Heart left ventricle (tissue), 16 donors: ENCODE measurements at regions of chr14 and their contacts with region 1.

Region 1: GRCh38 chr14:21263656-21264411 is 5.4 kb downstream of the HNRNPC start:
- DNase-seq: no peak
- ATAC-seq: no peak
- H3K4me3 ChIP-seq: peak overlapping the region in 2 of 12 donors; percentile 2 to 99
- H3K27ac ChIP-seq: peak overlapping the region in 1 of 12 donors; percentile 98
- H3K4me1 ChIP-seq: peaks cover 8 to 92% (median 76%) of the 10 kb centered on the region in 12 donors
- H3K27me3 ChIP-seq: no peaks in the 10 kb centered on the region
- CTCF ChIP-seq: no peak
- POLR2A ChIP-seq: no peak

Region 2: GRCh38 chr14:20609215-20610001 is 654.4 kb before region 1 on chr14:
- intact Hi-C with region 1: no loop called
- DNase-seq: peak in 4 of 5 donors; percentile 54 to 68 (median 63)
- ATAC-seq: peak; percentile 21 to 59 (median 48)
- H3K4me3 ChIP-seq: peak overlapping the region; percentile 61 to 97 (median 84)
- H3K27ac ChIP-seq: peak overlapping the region in 9 of 12 donors; percentile 20 to 86 (median 60)
- H3K4me1 ChIP-seq: peaks cover 0 to 40% (median 5%) of the 10 kb centered on the region in 12 donors
- H3K27me3 ChIP-seq: no peaks in the 10 kb centered on the region
- CTCF ChIP-seq: peak; percentile 89 to 99 (median 94)
- POLR2A ChIP-seq: no peak

Region 3: DNA sequence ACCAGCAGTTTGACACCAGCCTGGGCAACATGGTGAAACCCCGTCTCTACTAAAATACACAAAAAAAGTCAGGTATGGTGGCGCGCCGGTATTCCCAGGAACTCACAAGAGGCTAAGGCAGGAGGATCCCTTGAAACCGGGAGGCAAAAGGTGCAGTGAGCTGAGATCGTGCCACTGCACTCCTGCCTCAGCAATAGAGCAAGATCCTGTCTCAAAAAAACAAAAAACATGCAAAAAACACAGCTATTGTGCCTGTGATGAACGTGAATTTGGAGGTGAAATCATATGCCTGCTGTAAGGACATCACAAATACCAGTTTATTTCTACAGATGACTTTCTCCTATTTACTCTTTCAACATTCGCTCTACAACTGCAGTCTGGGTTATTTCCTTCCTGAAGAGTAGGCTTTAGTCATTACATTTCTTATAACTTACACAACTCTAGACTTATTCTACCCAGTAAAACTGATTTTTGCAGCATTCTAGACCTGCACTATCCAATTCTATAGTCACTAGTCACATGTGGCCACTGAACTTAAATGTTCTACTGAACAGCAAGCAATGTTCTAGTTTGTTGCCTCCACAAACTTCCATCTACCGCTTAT is 42.9 kb before region 1 on chr14:
- intact Hi-C with region 1: loop called in 2 of 10 experiments (anchors 5 kb)
- DNase-seq: no peak
- ATAC-seq: no peak
- H3K4me3 ChIP-seq: no peak overlapping the region
- H3K27ac ChIP-seq: no peak overlapping the region
- H3K4me1 ChIP-seq: peaks cover 0 to 74% (median 31%) of the 10 kb centered on the region in 12 donors
- H3K27me3 ChIP-seq: no peaks in the 10 kb centered on the region
- CTCF ChIP-seq: no peak
- POLR2A ChIP-seq: no peak

Region 4: DNA sequence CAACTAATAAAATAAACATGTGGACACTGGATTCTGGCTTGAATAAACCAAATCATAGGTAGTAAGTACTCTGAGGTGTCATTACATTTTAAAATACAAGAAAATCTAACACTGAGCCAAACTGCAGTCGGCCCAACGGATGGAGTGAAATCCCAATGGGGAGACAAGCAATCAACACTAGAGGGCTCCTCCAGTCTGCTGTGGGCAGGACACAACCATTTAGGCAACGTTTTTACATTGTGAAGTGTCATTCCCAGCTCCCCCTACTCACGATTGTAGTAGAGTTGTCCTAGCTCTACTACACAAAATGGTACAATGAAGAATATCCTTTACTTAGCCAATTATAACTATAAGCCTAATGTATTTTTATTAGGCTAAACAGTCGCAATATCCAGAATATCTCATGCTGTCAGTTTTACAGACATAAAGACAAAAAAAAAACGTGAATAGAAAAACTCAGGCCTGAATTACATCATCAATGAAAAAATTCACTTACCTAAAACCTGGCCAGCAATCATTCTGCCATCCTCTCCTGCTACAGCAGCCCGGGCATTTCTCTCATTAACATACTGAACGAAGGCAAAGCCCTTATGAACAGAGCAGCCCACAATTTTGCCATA is 30.3 kb before region 1 on chr14:
- intact Hi-C with region 1: loop called in 1 of 10 experiments (anchors 5 kb)
- DNase-seq: no peak
- ATAC-seq: peak in 3 of 4 donors; percentile 38 to 55 (median 53)
- H3K4me3 ChIP-seq: no peak overlapping the region
- H3K27ac ChIP-seq: no peak overlapping the region
- H3K4me1 ChIP-seq: peaks cover 0 to 97% (median 63%) of the 10 kb centered on the region in 12 donors
- H3K27me3 ChIP-seq: no peaks in the 10 kb centered on the region
- CTCF ChIP-seq: peak in 9 of 12 donors; percentile 28 to 51 (median 36)
- POLR2A ChIP-seq: no peak

Region 5: DNA sequence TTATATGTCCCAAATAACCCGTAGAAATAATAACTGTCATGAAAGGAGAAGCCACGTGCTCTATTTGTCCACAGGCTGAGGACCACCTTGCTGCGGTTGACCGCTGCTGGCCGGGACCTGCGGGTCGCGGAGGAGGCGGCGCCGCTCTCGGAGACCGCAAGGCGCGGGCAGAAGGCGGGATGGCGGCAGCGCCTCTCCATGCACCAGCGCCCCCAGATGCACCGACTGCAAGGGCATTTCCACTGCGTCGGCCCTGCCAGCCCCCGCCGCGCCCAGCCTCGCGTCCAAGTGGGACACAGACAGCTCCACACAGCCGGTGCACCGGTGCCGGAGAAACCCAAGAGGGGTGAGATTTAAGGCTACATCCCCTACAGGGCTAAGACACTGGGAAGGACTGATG is 37.1 kb after region 1 on chr14:
- intact Hi-C with region 1: no loop called
- DNase-seq: peak; percentile 19 to 70 (median 33)
- ATAC-seq: peak in 3 of 4 donors; percentile 55 to 67 (median 66)
- H3K4me3 ChIP-seq: peak overlapping the region in 9 of 12 donors; percentile 28 to 44 (median 37)
- H3K27ac ChIP-seq: no peak overlapping the region
- H3K4me1 ChIP-seq: peaks cover 0 to 7% (median 0%) of the 10 kb centered on the region in 12 donors
- H3K27me3 ChIP-seq: peaks cover 0 to 18% (median 0%) of the 10 kb centered on the region in 9 donors
- CTCF ChIP-seq: peak in 3 of 12 donors; percentile 6 to 24 (median 19)
- POLR2A ChIP-seq: no peak